ENCODE measurements at regions of chr15 and their contacts with region 1.

Region 1: GRCh38 chr15:51162865-51163762 is 68.4 kb upstream of the TNFAIP8L3 start:
- DNase-seq: peak; percentile 61
- H3K4me3 Mint-ChIP-seq: no peak overlapping the region
- H3K27ac Mint-ChIP-seq: no peak overlapping the region
- H3K4me1 Mint-ChIP-seq: peaks cover 2% of the 10 kb centered on the region
- H3K27me3 Mint-ChIP-seq: peaks cover 21% of the 10 kb centered on the region

Region 2: DNA sequence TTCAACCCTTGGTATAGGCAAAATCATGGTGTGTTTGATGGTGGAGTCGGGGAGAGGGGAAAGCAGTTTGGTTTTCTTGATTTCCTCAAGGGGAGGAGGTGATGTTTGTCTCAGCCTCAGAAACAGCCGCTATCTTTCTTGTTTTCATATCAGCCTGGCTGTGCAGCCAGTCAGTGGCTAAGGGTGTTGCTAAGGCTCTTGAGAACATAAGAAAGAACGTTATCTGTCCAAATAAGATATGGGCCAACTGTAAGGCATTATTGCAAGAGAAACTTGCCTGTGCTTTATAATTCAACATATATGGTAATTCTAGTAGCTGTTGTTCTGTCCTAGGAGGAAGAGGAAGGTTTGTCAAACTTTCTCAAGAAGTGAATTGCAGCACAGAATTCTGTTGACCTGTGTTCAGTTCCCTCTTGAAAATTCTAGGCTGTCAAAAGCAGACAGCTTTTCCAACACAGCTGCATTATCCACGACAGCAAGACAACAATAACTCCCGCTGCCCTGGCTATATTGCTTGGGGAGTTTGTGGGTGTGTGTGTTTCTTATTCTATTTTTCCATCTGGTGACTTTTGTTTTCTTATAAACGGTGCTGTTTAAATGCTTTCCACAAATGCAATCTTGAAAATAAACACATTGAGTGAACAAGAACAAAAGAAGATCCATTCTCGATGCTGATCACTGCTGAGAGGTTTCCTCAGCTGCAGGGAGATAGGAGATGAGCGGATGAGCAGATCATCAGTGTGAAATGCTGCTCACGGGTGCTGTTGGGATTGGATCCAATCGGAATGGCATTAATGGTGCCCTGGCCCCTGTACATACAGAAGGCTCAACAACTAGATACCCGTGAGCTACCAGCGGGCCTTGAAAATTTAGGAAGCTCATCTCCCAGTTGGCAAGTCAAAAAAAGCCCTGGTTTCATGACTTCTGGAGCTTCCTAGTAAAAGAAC is 22.4 kb after region 1 on chr15:
- CTCF ChIA-PET with region 1: interaction called, 19 read pairs
- POLR2A ChIA-PET with region 1: no interaction called
- DNase-seq: no peak
- H3K4me3 Mint-ChIP-seq: no peak overlapping the region
- H3K27ac Mint-ChIP-seq: no peak overlapping the region
- H3K4me1 Mint-ChIP-seq: no peaks in the 10 kb centered on the region
- H3K27me3 Mint-ChIP-seq: peaks cover 6% of the 10 kb centered on the region

Region 3: DNA sequence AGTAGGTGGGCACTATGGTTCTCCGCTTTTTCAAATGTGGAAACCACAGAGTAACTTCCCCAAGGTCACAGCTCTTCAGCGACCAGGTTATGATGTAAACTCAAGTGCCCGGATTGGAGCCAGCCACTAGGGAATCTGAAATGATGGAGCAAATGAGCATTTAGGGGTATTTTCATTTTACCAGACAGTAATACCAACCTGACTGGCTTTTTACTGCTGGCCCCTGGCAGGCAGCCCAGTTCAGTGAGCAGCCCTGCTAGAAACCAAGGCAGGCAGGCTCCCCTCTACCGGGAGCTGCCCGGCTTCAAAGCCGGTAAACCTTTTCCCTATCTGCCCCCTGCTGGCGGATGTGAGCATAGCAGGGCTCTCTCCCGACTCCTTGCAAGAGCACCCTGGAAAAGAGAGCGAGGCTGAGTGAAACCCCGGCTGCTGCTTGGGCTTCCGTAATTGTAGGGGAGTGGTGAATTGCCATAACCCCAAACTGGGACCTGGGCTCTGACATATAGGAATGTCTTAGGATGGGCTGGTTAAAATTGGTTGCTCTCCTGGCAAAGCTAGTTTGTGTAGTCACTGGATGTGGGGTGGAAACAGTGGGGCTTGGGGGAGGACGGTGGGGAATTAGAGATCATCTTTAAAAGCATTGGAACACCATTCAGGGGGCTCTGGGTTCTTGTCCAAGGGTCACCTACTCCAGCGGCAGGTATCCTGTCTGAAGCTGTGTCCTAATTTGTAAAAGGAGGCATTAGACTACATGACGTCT is 29.6 kb after region 1 on chr15:
- CTCF ChIA-PET with region 1: interaction called, 25 read pairs
- POLR2A ChIA-PET with region 1: no interaction called
- DNase-seq: peak; percentile 76
- H3K4me3 Mint-ChIP-seq: no peak overlapping the region
- H3K27ac Mint-ChIP-seq: no peak overlapping the region
- H3K4me1 Mint-ChIP-seq: no peaks in the 10 kb centered on the region
- H3K27me3 Mint-ChIP-seq: peaks cover 31% of the 10 kb centered on the region

Region 4: GRCh38 chr15:51281368-51281967 is 118.4 kb after region 1 on chr15:
- CTCF ChIA-PET with region 1: interaction called, 54 read pairs
- POLR2A ChIA-PET with region 1: no interaction called
- DNase-seq: peak; percentile 25
- H3K4me3 Mint-ChIP-seq: no peak overlapping the region
- H3K27ac Mint-ChIP-seq: no peak overlapping the region
- H3K4me1 Mint-ChIP-seq: peaks cover 5% of the 10 kb centered on the region
- H3K27me3 Mint-ChIP-seq: peaks cover 23% of the 10 kb centered on the region

Region 5: DNA sequence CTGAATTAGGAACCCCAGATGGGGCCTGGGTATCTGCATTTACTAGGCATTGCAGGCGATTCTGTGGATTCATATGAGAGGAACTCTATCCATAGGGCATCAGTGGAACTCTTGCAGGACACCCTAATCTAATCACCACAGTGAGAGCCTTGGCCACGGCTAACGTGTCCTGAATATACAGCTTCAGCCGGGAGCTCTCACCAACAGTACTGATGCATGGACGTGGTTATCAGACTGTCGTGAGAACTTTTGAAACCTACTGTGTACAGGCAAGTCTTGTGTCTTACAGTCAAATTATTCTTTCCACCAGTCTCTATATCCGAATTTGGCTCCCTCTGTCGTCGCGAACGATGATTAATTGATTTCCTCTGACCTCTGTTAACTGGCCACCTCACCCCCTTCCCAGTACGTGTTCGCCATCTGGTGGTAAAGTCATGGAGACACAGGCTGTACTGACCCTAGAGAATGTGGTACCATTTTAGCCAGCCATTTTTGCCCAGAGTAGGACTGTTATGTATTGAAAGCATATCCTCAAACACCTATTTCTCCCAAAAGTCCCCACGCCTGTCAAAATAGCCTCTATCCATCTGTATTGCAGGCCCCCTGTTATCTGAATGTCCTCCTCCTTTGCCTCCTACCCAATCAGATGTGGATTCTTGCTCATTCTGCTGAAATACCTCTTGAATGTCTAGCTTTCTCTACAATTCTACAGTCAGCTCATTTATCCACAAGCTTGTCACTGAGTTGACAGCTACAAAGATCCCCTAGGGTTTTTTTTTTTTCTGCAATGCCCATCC is 218.1 kb after region 1 on chr15:
- CTCF ChIA-PET with region 1: interaction called, 40 read pairs
- POLR2A ChIA-PET with region 1: no interaction called
- DNase-seq: peak; percentile 34
- H3K4me3 Mint-ChIP-seq: no peak overlapping the region
- H3K27ac Mint-ChIP-seq: no peak overlapping the region
- H3K4me1 Mint-ChIP-seq: no peaks in the 10 kb centered on the region
- H3K27me3 Mint-ChIP-seq: peaks cover 5% of the 10 kb centered on the region

Region 6: DNA sequence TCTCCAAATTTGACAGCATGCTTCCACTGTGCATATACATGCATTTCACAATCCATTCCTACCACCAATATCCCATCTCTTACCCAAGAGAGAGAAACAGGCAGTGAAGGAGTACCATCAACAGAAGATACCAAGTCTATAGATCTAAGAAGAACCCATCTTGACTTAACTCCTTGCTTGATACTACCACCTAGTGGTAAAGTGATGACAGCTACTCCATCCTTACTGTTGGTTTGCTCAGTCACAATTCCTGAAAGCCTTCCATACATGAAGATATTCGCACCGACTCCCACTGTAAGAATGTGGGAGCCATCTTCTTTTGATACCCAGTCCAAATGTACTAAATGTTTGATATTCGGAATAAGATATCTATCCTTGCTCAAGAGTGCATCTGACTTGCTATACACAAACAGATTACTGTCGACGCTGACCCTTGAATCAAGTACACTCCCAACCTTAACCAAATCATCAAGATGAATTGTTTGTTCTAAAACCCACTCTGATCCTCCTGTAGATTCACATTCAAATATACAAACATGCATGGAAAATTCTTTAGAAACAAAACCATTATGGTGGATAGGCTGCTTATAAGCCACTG is 336.4 kb after region 1 on chr15:
- CTCF ChIA-PET with region 1: interaction called, 19 read pairs
- POLR2A ChIA-PET with region 1: no interaction called
- DNase-seq: no peak
- H3K4me3 Mint-ChIP-seq: no peak overlapping the region
- H3K27ac Mint-ChIP-seq: no peak overlapping the region
- H3K4me1 Mint-ChIP-seq: no peaks in the 10 kb centered on the region
- H3K27me3 Mint-ChIP-seq: no peaks in the 10 kb centered on the region